Posterior vena cava (tissue), 2 donors: ENCODE measurements at regions of chr6 and their contacts with region 1.

Region 1: GRCh38 chr6:155561257-155561965 is 105.8 kb upstream of the NOX3 start:
- DNase-seq: no peak

Region 2: GRCh38 chr6:156674197-156674596 is 1112.8 kb after region 1 on chr6:
- intact Hi-C with region 1: loop called in 1 of 2 experiments (anchors 5 kb)
- DNase-seq: no peak

Region 3: DNA sequence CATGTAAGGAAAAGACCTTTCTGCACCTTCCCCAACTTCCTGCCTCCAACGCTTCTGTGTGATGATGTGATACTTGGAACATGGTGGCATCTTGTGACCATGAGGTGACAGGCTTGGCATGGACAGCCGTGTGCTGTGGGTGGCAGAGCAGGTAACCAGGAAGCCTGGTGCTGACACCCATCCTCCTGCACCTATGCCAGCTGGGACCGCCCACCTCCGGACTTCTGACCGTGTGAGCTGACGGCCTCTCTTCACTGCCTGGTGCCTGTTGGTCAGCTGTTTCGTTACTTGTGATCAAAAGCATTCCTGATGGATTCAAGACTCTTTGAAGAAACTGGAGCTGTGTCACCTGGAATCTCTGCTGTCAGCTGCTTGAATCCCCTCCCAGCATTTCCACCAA is 1691.6 kb after region 1 on chr6:
- intact Hi-C with region 1: no loop called
- DNase-seq: peak; percentile 30